CD4-positive, alpha-beta T cell (primary cell): ENCODE measurements at regions of chr20 and their contacts with region 1.

Region 1: GRCh38 chr20:51385646-51386530 is 156.6 kb downstream of the NFATC2 start:
- DNase-seq: peak in 10 of 14 experiments; percentile 13 to 70 (median 34)
- ATAC-seq: peak; percentile 52
- H3K4me3 ChIP-seq: no peak overlapping the region
- H3K4me3 Mint-ChIP-seq: no peak overlapping the region
- H3K27ac ChIP-seq: no peak overlapping the region
- H3K27ac Mint-ChIP-seq: peak overlapping the region; percentile 34
- H3K4me1 ChIP-seq: peaks cover 35% of the 10 kb centered on the region
- H3K4me1 Mint-ChIP-seq: peaks cover 22% of the 10 kb centered on the region
- H3K27me3 ChIP-seq: no peaks in the 10 kb centered on the region
- H3K27me3 Mint-ChIP-seq: no peaks in the 10 kb centered on the region
- CTCF ChIP-seq: peak; percentile 57

Region 2: GRCh38 chr20:51372176-51372803 is 13.6 kb before region 1 on chr20:
- CTCF ChIA-PET with region 1: no interaction called
- POLR2A ChIA-PET with region 1: no interaction called
- intact Hi-C with region 1: no loop called
- DNase-seq: peak; percentile 29 to 75 (median 50)
- ATAC-seq: peak; percentile 60
- H3K4me3 ChIP-seq: no peak overlapping the region
- H3K4me3 Mint-ChIP-seq: no peak overlapping the region
- H3K27ac ChIP-seq: no peak overlapping the region
- H3K27ac Mint-ChIP-seq: no peak overlapping the region
- H3K4me1 ChIP-seq: peaks cover 8% of the 10 kb centered on the region
- H3K4me1 Mint-ChIP-seq: no peaks in the 10 kb centered on the region
- H3K27me3 ChIP-seq: no peaks in the 10 kb centered on the region
- H3K27me3 Mint-ChIP-seq: no peaks in the 10 kb centered on the region
- CTCF ChIP-seq: peak; percentile 83

Region 3: GRCh38 chr20:51417250-51418136 is 31.6 kb after region 1 on chr20:
- CTCF ChIA-PET with region 1: interaction called, 15 read pairs
- POLR2A ChIA-PET with region 1: no interaction called
- intact Hi-C with region 1: loop called (anchors 5 kb)
- DNase-seq: peak in 5 of 14 experiments; percentile 11 to 73 (median 59)
- ATAC-seq: peak; percentile 30
- H3K4me3 ChIP-seq: no peak overlapping the region
- H3K4me3 Mint-ChIP-seq: peak overlapping the region; percentile 22
- H3K27ac ChIP-seq: peak overlapping the region; percentile 48 to 85
- H3K27ac Mint-ChIP-seq: peak overlapping the region; percentile 86
- H3K4me1 ChIP-seq: peaks cover 67% of the 10 kb centered on the region
- H3K4me1 Mint-ChIP-seq: peaks cover 57% of the 10 kb centered on the region
- H3K27me3 ChIP-seq: no peaks in the 10 kb centered on the region
- H3K27me3 Mint-ChIP-seq: no peaks in the 10 kb centered on the region
- CTCF ChIP-seq: no peak

Region 4: GRCh38 chr20:51423290-51423667 is 37.4 kb after region 1 on chr20:
- CTCF ChIA-PET with region 1: interaction called, 15 read pairs
- POLR2A ChIA-PET with region 1: interaction called, 3 read pairs
- intact Hi-C with region 1: loop called (anchors 5 kb)
- DNase-seq: no peak
- ATAC-seq: no peak
- H3K4me3 ChIP-seq: no peak overlapping the region
- H3K4me3 Mint-ChIP-seq: peak overlapping the region; percentile 4
- H3K27ac ChIP-seq: peak overlapping the region; percentile 32 to 69
- H3K27ac Mint-ChIP-seq: peak overlapping the region; percentile 75
- H3K4me1 ChIP-seq: peaks cover 62% of the 10 kb centered on the region
- H3K4me1 Mint-ChIP-seq: peaks cover 58% of the 10 kb centered on the region
- H3K27me3 ChIP-seq: no peaks in the 10 kb centered on the region
- H3K27me3 Mint-ChIP-seq: no peaks in the 10 kb centered on the region
- CTCF ChIP-seq: no peak

Region 5: GRCh38 chr20:51595058-51595532 is 209.2 kb after region 1 on chr20:
- CTCF ChIA-PET with region 1: interaction called, 9 read pairs
- POLR2A ChIA-PET with region 1: interaction called, 4 read pairs
- intact Hi-C with region 1: loop called (anchors 1 kb)
- DNase-seq: peak; percentile 55 to 86 (median 74)
- ATAC-seq: peak; percentile 96
- H3K4me3 ChIP-seq: no peak overlapping the region
- H3K4me3 Mint-ChIP-seq: peak overlapping the region; percentile 23
- H3K27ac ChIP-seq: no peak overlapping the region
- H3K27ac Mint-ChIP-seq: no peak overlapping the region
- H3K4me1 ChIP-seq: peaks cover 7% of the 10 kb centered on the region
- H3K4me1 Mint-ChIP-seq: peaks cover 13% of the 10 kb centered on the region
- H3K27me3 ChIP-seq: no peaks in the 10 kb centered on the region
- H3K27me3 Mint-ChIP-seq: no peaks in the 10 kb centered on the region
- CTCF ChIP-seq: peak; percentile 83